BJ (cell line): ENCODE measurements at regions of chr4 and their contacts with region 1.

Region 1: GRCh38 chr4:40016007-40016406 is 38.3 kb upstream of the PDS5A start:
- DNase-seq: no peak
- H3K4me3 ChIP-seq: no peak overlapping the region
- H3K27me3 ChIP-seq: no peaks in the 10 kb centered on the region
- CTCF ChIP-seq: no peak

Region 2: DNA sequence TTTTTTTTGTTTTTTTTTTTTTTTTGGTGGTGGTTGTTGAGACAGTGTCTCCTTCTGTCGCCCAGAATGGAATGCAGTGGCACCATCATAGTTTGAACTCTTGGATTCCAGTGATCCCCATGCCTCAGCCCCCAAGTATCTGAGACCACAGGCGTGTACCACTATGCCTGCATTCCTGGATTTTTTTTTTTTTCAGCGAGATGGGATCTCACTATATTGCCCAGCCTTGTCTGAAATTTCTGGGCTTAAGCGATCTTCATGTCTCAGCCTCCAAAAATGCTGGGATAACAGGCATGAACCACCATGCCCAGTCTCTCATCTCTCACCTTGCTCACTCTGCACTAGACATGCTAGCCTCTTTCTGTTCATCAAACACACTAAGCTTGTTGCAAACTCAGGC is 214.0 kb before region 1 on chr4:
- CTCF ChIA-PET with region 1: no interaction called
- POLR2A ChIA-PET with region 1: interaction called, 18 read pairs
- DNase-seq: no peak
- H3K4me3 ChIP-seq: no peak overlapping the region
- H3K27me3 ChIP-seq: no peaks in the 10 kb centered on the region
- CTCF ChIP-seq: no peak